ENCODE measurements at regions of chr11 and their contacts with region 1.

Region 1: DNA sequence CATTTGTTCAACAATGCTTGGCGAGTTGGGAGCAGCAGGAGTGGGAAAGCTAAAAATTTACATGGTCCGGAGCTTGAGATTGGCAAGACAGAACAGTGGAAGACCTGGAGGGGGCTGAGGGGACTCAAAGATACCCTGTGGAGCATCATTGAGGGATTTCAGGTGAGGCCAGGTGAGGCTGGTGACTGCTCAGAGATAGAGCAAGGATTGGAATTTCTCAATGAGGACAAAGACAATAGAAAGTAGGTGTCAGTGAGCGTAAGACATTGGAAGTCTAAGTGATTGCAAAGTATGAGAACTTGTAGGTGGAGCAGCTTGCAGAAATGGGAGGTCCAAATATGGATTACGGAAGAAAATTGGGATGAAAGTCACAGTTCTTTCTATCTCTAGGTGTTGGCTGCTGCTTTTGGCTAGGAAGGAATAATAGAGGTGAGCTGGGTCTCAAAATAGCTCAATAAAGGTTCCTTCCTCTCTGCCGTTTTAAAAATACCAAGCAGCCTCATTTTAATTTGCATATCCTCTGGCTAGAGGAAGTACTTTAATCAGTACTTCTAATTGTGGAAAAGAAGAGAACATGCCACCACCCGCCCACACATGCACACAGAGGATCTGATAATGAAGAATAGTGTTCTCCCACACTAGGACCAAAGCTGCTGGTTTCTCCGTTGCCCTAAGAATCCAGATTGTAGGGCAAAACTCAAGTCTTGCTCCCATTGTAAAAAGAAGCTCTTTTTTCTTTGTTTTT is 41.8 kb upstream of the SORL1-AS1 start:
- DNase-seq: peak; percentile 71
- ATAC-seq: peak; percentile 81
- H3K4me3 ChIP-seq: peak overlapping the region in 3 of 5 experiments; percentile 36 to 45 (median 40)
- H3K4me3 Mint-ChIP-seq: peak overlapping the region; percentile 80
- H3K27ac ChIP-seq: peak overlapping the region; percentile 52 to 59
- H3K27ac Mint-ChIP-seq: peak overlapping the region; percentile 72
- H3K4me1 ChIP-seq: peaks cover 46 to 47% of the 10 kb centered on the region in 2 donors
- H3K4me1 Mint-ChIP-seq: peaks cover 74% of the 10 kb centered on the region
- H3K27me3 ChIP-seq: no peaks in the 10 kb centered on the region
- H3K27me3 Mint-ChIP-seq: no peaks in the 10 kb centered on the region
- CTCF ChIP-seq: no peak

Region 2: GRCh38 chr11:120235024-120235861 is 1259.3 kb before region 1 on chr11:
- CTCF ChIA-PET with region 1: no interaction called
- POLR2A ChIA-PET with region 1: no interaction called
- intact Hi-C with region 1: no loop called
- DNase-seq: peak; percentile 44
- ATAC-seq: no peak
- H3K4me3 ChIP-seq: no peak overlapping the region
- H3K4me3 Mint-ChIP-seq: no peak overlapping the region
- H3K27ac ChIP-seq: no peak overlapping the region
- H3K27ac Mint-ChIP-seq: no peak overlapping the region
- H3K4me1 ChIP-seq: no peaks in the 10 kb centered on the region
- H3K4me1 Mint-ChIP-seq: no peaks in the 10 kb centered on the region
- H3K27me3 ChIP-seq: peaks cover 0 to 34% (median 4%) of the 10 kb centered on the region in 4 experiments
- H3K27me3 Mint-ChIP-seq: peaks cover 46% of the 10 kb centered on the region
- CTCF ChIP-seq: peak; percentile 65

Region 3: DNA sequence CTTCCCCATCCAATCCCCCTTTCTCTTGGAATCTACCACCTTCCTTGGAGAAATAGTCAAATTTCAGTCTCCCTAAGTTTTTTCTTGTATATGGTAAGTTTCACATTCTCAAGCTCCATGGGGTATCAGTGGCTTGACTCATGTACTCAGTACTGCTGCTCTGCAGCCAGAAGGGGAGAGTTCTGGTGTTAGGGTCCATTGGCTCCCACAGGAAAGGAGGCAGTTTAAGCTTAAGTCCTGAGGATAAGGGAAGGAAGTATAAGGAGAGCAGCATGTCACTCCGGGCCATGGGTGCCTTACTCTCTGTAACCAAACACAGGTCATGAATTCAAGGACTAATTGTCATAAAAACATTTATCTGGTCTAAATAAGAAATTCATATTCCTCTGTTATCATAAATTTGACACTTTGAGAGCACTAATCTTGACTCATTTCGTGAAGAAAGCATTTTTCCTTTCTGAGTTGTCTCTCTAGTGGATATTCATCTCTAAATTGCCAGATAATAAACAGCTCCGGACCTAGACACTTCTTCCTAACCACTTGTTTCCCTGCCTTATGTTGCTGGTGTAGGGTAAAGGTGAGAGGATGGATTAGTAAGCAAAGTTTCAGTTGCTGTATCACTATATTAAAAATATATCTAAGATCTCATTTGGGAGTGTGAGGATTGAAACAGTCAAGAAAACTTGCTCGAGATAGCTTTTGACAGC is 62.6 kb before region 1 on chr11:
- CTCF ChIA-PET with region 1: no interaction called
- POLR2A ChIA-PET with region 1: interaction called, 6 read pairs
- intact Hi-C with region 1: loop called (anchors 5 kb)
- DNase-seq: no peak
- ATAC-seq: no peak
- H3K4me3 ChIP-seq: no peak overlapping the region
- H3K4me3 Mint-ChIP-seq: no peak overlapping the region
- H3K27ac ChIP-seq: no peak overlapping the region
- H3K27ac Mint-ChIP-seq: peak overlapping the region; percentile 57
- H3K4me1 ChIP-seq: peaks cover 34 to 43% of the 10 kb centered on the region in 2 donors
- H3K4me1 Mint-ChIP-seq: peaks cover 60% of the 10 kb centered on the region
- H3K27me3 ChIP-seq: no peaks in the 10 kb centered on the region
- H3K27me3 Mint-ChIP-seq: no peaks in the 10 kb centered on the region
- CTCF ChIP-seq: no peak

Region 4: DNA sequence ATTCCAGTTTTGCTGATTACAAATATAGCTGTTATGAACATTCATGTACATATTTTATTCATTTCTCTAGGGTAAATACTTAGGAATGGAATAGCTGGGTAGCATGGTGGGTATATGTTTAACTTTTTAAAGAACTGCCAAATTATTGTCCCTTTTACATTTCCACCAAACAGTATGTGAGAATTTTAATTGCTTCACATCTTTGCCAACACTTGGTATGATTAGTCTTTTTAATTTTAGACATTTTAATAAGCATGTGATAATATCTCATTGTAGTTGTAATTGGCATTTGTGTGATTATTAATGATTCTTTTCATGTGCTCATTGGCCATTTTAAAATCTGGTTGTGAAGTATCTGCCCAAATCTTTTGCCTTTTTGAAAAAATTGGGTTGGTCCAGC is 30.8 kb after region 1 on chr11:
- CTCF ChIA-PET with region 1: no interaction called
- POLR2A ChIA-PET with region 1: no interaction called
- intact Hi-C with region 1: loop called (anchors 5 kb)
- DNase-seq: no peak
- ATAC-seq: no peak
- H3K4me3 ChIP-seq: no peak overlapping the region
- H3K4me3 Mint-ChIP-seq: no peak overlapping the region
- H3K27ac ChIP-seq: no peak overlapping the region
- H3K27ac Mint-ChIP-seq: no peak overlapping the region
- H3K4me1 ChIP-seq: peaks cover 20% of the 10 kb centered on the region in 2 donors
- H3K4me1 Mint-ChIP-seq: peaks cover 23% of the 10 kb centered on the region
- H3K27me3 ChIP-seq: no peaks in the 10 kb centered on the region
- H3K27me3 Mint-ChIP-seq: no peaks in the 10 kb centered on the region
- CTCF ChIP-seq: no peak

Region 5: DNA sequence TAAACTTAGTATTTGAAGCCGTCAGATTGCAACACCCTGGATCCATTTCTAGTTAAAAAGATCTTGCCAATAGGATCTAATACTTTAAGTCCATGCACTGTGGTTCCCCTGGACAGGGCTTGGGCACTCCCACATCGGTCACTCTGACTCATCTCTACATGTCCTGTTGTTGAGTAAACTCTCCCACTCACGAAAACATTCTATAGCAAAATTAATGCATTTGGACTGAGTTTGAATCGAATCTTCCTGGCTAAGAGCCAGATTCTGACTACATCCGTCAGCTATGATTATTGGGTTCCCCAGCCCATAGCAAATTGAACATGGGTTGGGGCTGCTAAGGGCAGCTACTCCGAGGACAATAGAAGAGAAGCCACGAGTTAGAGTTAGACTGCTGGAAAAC is 140.4 kb after region 1 on chr11:
- CTCF ChIA-PET with region 1: no interaction called
- POLR2A ChIA-PET with region 1: no interaction called
- intact Hi-C with region 1: no loop called
- DNase-seq: no peak
- ATAC-seq: no peak
- H3K4me3 ChIP-seq: no peak overlapping the region
- H3K4me3 Mint-ChIP-seq: no peak overlapping the region
- H3K27ac ChIP-seq: no peak overlapping the region
- H3K27ac Mint-ChIP-seq: no peak overlapping the region
- H3K4me1 ChIP-seq: no peaks in the 10 kb centered on the region
- H3K4me1 Mint-ChIP-seq: no peaks in the 10 kb centered on the region
- H3K27me3 ChIP-seq: no peaks in the 10 kb centered on the region
- H3K27me3 Mint-ChIP-seq: no peaks in the 10 kb centered on the region
- CTCF ChIP-seq: no peak